Endothelial cell of umbilical vein (primary cell): ENCODE measurements at regions of chr16 and their contacts with region 1.

Region 1: GRCh38 chr16:49643429-49644144 is 212.3 kb downstream of the ZNF423 start:
- DNase-seq: peak; percentile 90
- H3K4me3 ChIP-seq: no peak overlapping the region
- H3K27ac ChIP-seq: peak overlapping the region; percentile 59
- H3K4me1 ChIP-seq: peaks cover 25% of the 10 kb centered on the region
- H3K27me3 ChIP-seq: no peaks in the 10 kb centered on the region
- CTCF ChIP-seq: no peak
- POLR2A ChIP-seq: no peak

Region 2: GRCh38 chr16:49608779-49609178 is 34.8 kb before region 1 on chr16:
- CTCF ChIA-PET with region 1: no interaction called
- POLR2A ChIA-PET with region 1: no interaction called
- dilution Hi-C with region 1: no loop called
- intact Hi-C with region 1: loop called (anchors 1 kb)
- DNase-seq: peak; percentile 38
- H3K4me3 ChIP-seq: no peak overlapping the region
- H3K27ac ChIP-seq: no peak overlapping the region
- H3K4me1 ChIP-seq: peaks cover 10% of the 10 kb centered on the region
- H3K27me3 ChIP-seq: no peaks in the 10 kb centered on the region
- CTCF ChIP-seq: peak; percentile 25 to 49
- POLR2A ChIP-seq: no peak

Region 3: GRCh38 chr16:49663081-49664065 is 19.8 kb after region 1 on chr16:
- CTCF ChIA-PET with region 1: no interaction called
- POLR2A ChIA-PET with region 1: no interaction called
- dilution Hi-C with region 1: no loop called
- intact Hi-C with region 1: loop called (anchors 2 kb)
- DNase-seq: no peak
- H3K4me3 ChIP-seq: no peak overlapping the region
- H3K27ac ChIP-seq: no peak overlapping the region
- H3K4me1 ChIP-seq: peaks cover 8% of the 10 kb centered on the region
- H3K27me3 ChIP-seq: no peaks in the 10 kb centered on the region
- CTCF ChIP-seq: no peak
- POLR2A ChIP-seq: no peak

Region 4: GRCh38 chr16:49755313-49755620 is 111.7 kb after region 1 on chr16:
- CTCF ChIA-PET with region 1: no interaction called
- POLR2A ChIA-PET with region 1: no interaction called
- dilution Hi-C with region 1: no loop called
- intact Hi-C with region 1: loop called (anchors 1 kb)
- DNase-seq: peak; percentile 63
- H3K4me3 ChIP-seq: peak overlapping the region in 2 of 3 experiments; percentile 16 to 18
- H3K27ac ChIP-seq: no peak overlapping the region
- H3K4me1 ChIP-seq: peaks cover 12% of the 10 kb centered on the region
- H3K27me3 ChIP-seq: no peaks in the 10 kb centered on the region
- CTCF ChIP-seq: peak; percentile 26 to 46
- POLR2A ChIP-seq: no peak